ENCODE measurements at regions of chr14 and their contacts with region 1.

Region 1: DNA sequence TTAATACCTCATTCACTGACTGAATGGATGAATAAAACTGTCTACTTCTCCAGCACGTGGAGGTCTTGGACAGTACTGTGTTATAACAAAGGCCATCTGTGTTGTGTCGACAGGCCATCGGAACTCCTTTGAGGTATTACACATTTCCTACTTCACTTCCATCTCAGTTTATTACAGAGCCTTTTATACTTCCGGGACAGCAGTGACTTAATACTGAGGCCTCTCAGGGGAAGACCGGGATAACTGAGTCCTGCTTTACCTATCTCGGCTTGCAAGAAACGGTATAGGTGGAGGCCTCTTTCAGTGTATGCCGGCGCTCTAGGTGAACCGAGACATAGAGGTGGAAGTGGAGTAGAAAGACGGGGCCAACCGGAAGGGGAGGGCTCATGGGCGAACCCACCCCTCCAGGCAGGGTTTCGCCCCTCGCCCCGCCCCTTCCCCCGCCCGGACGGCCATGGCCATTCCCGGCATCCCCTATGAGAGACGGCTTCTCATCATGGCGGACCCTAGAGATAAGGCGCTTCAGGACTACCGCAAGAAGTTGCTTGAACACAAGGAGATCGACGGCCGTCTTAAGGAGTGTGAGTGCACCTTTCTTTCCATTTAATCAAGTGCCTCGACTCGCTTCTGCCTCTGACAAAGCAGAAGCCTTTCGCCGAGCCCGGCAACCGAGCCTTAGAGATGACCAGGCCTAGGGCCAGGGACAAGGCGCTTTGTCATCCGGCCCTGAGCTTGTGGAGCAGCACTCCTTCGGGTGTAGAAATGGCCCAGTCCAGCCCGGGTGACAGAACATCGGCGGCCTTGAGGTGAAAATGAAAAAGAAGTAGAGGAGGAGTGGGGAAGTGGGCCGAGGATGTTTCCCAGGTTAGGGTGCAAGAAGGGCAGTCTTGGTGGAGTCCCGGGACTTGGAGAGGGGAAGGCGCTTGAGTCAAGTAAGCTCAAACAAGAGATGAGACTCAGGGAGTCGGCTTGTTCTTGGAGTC is at the start of gene PSMC6:
- DNase-seq: peak; percentile 96 to 97 (median 96)
- ATAC-seq: peak; percentile 99 to 100 (median 100)
- H3K4me3 ChIP-seq: peak within 1 kb of the TSS; percentile 61 to 91 (median 80)
- H3K27ac ChIP-seq: peak within 1 kb of the TSS; percentile 68 to 93 (median 90)
- H3K4me1 ChIP-seq: peaks cover 0 to 43% (median 20%) of the 10 kb centered on the region in 12 donors
- H3K27me3 ChIP-seq: no peaks in the 10 kb centered on the region
- CTCF ChIP-seq: no peak
- POLR2A ChIP-seq: peak in 1 of 2 donors; percentile 58
- total RNA-seq, gene PSMC6: 74.3 to 90.7 (median 81.4) TPM

Region 2: GRCh38 chr14:52729925-52730667 is 23.1 kb after region 1 on chr14 and contains the start of gene STYX:
- intact Hi-C with region 1: loop called in 2 of 10 experiments (anchors 2 kb)
- DNase-seq: peak; percentile 98 to 100 (median 99)
- ATAC-seq: peak; percentile 99
- H3K4me3 ChIP-seq: peak within 1 kb of the TSS; percentile 69 to 99 (median 94)
- H3K27ac ChIP-seq: peak within 1 kb of the TSS; percentile 64 to 94 (median 88)
- H3K4me1 ChIP-seq: peaks cover 0 to 19% (median 7%) of the 10 kb centered on the region in 12 donors
- H3K27me3 ChIP-seq: no peaks in the 10 kb centered on the region
- CTCF ChIP-seq: peak in 7 of 12 donors; percentile 16 to 57 (median 20)
- POLR2A ChIP-seq: peak; percentile 53 to 94
- total RNA-seq, gene STYX: 10.6 to 16.5 (median 12.9) TPM

Region 3: GRCh38 chr14:53152890-53153701 is 446.1 kb after region 1 on chr14 and contains the start of gene DDHD1:
- intact Hi-C with region 1: loop called in 1 of 10 experiments (anchors 10 kb)
- DNase-seq: peak; percentile 75 to 92 (median 85)
- ATAC-seq: peak; percentile 66 to 96 (median 92)
- H3K4me3 ChIP-seq: peak within 1 kb of the TSS; percentile 58 to 96 (median 88)
- H3K27ac ChIP-seq: peak within 1 kb of the TSS; percentile 80 to 95 (median 89)
- H3K4me1 ChIP-seq: peaks cover 0 to 41% (median 15%) of the 10 kb centered on the region in 12 donors
- H3K27me3 ChIP-seq: no peaks in the 10 kb centered on the region
- CTCF ChIP-seq: no peak
- POLR2A ChIP-seq: peak in 1 of 2 donors; percentile 64
- total RNA-seq, gene DDHD1: 5.9 to 12.1 (median 7.8) TPM

Measured in heart left ventricle (tissue), 16 donors.